ENCODE measurements at regions of chr9 and their contacts with region 1.

Region 1: GRCh38 chr9:124420991-124421543 is 5.8 kb upstream of the PSMB7 start:
- DNase-seq: peak in 2 of 7 donors; percentile 10 to 76
- H3K4me3 ChIP-seq: no peak overlapping the region
- H3K27ac ChIP-seq: no peak overlapping the region
- H3K4me1 ChIP-seq: peaks cover 0 to 7% of the 10 kb centered on the region in 2 donors
- H3K27me3 ChIP-seq: no peaks in the 10 kb centered on the region
- CTCF ChIP-seq: no peak
- POLR2A ChIP-seq: no peak

Region 2: DNA sequence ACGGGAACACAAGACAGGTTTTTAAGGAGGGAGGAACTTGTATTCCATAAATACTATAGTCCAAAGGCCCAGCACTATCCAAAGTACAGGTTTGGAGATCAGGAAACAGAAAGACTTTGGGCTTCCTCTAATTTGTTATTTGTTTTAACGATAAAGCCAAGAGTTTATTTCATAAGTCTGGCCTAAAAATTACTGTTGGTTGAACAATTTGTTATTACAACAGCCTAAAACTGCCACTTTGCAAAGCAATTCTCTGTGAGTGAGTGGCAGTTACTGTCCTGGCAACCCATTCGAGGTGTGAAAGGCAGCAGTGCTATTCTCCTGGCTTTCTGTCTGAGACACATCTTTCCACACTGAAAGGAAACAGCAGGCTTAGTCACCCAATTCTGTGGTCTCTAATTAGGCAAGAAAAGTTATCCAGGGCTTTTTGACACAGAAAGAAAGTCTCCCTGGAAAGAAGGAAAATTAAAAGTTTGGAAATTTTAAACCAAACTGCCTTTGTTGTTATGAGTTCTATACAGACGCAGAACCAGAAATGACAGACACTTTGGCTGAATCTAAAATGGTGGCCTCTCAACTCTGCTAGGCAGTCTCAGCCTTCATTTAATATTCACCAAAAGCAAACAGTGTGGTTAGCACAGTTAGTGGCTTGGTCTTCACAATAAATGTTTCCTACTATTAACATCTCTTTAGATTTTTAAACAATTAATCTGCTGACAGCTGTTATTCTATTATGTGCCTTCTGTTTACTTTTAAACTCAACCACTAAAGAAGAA is 39.7 kb before region 1 on chr9:
- intact Hi-C with region 1: no loop called
- DNase-seq: no peak
- H3K4me3 ChIP-seq: no peak overlapping the region
- H3K27ac ChIP-seq: no peak overlapping the region
- H3K4me1 ChIP-seq: peaks cover 5 to 18% of the 10 kb centered on the region in 2 donors
- H3K27me3 ChIP-seq: no peaks in the 10 kb centered on the region
- CTCF ChIP-seq: no peak
- POLR2A ChIP-seq: no peak

Region 3: GRCh38 chr9:124477806-124478285 is 56.8 kb after region 1 on chr9:
- intact Hi-C with region 1: loop called in 1 of 2 experiments (anchors 5 kb)
- DNase-seq: peak in 2 of 7 donors; percentile 16 to 26
- H3K4me3 ChIP-seq: peak overlapping the region in 1 of 4 donors; percentile 30
- H3K27ac ChIP-seq: no peak overlapping the region
- H3K4me1 ChIP-seq: peaks cover 8 to 14% of the 10 kb centered on the region in 2 donors
- H3K27me3 ChIP-seq: peaks cover 7% of the 10 kb centered on the region
- CTCF ChIP-seq: no peak
- POLR2A ChIP-seq: no peak

Region 4: DNA sequence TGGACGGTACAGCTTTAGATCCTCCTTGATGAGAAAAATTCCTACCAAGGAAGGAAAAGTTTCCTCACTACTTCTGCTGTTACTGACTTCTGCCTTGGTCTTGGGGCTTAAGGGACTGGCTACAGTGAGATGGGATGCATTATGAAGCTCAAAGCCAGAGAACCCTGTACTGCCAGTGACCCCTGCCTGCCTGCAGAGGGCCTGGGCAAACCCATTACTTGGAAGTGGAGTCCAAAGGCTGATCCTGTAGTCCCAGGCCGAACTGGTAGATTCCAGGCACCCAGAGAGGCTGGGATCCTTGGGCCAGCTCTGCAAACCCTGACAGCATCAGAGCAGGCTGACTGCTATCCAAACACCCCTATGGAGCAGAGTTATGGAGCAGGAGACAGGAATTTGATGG is 111.8 kb after region 1 on chr9:
- intact Hi-C with region 1: loop called (anchors 5 kb)
- DNase-seq: no peak
- H3K4me3 ChIP-seq: no peak overlapping the region
- H3K27ac ChIP-seq: no peak overlapping the region
- H3K4me1 ChIP-seq: peaks cover 2% of the 10 kb centered on the region in 2 donors
- H3K27me3 ChIP-seq: no peaks in the 10 kb centered on the region
- CTCF ChIP-seq: no peak
- POLR2A ChIP-seq: no peak

Region 5: GRCh38 chr9:124537926-124538325 is 116.9 kb after region 1 on chr9:
- intact Hi-C with region 1: loop called (anchors 5 kb)
- DNase-seq: peak in 2 of 7 donors; percentile 43 to 61
- H3K4me3 ChIP-seq: no peak overlapping the region
- H3K27ac ChIP-seq: no peak overlapping the region
- H3K4me1 ChIP-seq: no peaks in the 10 kb centered on the region
- H3K27me3 ChIP-seq: no peaks in the 10 kb centered on the region
- CTCF ChIP-seq: no peak
- POLR2A ChIP-seq: no peak

Region 6: DNA sequence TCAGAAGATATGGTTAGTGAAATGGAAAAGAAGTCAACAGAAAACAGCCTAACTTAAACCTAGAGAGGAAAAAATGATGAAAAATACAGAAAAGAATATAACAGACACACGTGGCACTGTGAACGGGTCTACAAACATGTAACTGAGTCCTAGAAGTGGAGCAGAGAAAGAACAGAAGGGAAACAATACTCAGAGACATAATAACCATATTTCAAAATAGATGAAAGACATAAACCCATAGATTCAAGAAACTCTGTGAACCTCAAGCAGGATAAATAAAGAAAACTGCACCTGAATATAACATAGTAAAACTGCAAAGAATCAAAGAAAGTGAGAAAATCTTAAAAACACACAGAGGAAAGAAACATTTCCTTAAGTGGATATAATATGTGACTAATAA is 587.5 kb after region 1 on chr9:
- intact Hi-C with region 1: no loop called
- DNase-seq: no peak
- H3K4me3 ChIP-seq: no peak overlapping the region
- H3K27ac ChIP-seq: no peak overlapping the region
- H3K4me1 ChIP-seq: no peaks in the 10 kb centered on the region
- H3K27me3 ChIP-seq: no peaks in the 10 kb centered on the region
- CTCF ChIP-seq: no peak
- POLR2A ChIP-seq: no peak

Measured in adrenal gland (tissue), 19 donors.